ENCODE measurements at regions of chr11 and their contacts with region 1.

Region 1: GRCh38 chr11:10429526-10429925 is 25.5 kb upstream of the AMPD3 start:
- DNase-seq: no peak
- ATAC-seq: no peak
- H3K4me3 Mint-ChIP-seq: no peak overlapping the region
- H3K27ac Mint-ChIP-seq: no peak overlapping the region
- H3K4me1 Mint-ChIP-seq: no peaks in the 10 kb centered on the region
- H3K27me3 Mint-ChIP-seq: peaks cover 2% of the 10 kb centered on the region

Region 2: DNA sequence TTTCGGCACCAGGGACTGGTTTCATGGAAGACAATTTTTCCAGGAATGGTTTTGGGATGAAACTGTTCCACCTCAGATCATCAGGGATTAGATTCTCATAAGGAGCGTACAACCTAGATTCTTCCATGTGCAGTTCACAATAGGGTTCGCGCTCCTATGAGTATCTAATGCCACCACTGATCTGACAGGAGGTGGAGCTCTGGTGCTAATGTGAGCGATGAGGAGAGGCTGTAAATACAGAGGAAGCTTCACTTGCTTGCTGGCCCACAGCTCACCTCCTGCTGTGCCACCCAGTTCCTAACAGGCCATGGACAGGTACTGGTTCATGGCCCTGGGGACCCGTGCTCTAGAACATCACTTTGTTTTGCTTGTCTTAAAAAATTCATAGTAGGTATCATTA is 16.3 kb before region 1 on chr11:
- CTCF ChIA-PET with region 1: interaction called, 10 read pairs
- POLR2A ChIA-PET with region 1: no interaction called
- intact Hi-C with region 1: no loop called
- DNase-seq: peak; percentile 70
- ATAC-seq: peak; percentile 94
- H3K4me3 Mint-ChIP-seq: no peak overlapping the region
- H3K27ac Mint-ChIP-seq: no peak overlapping the region
- H3K4me1 Mint-ChIP-seq: peaks cover 32% of the 10 kb centered on the region
- H3K27me3 Mint-ChIP-seq: no peaks in the 10 kb centered on the region

Measured in activated CD4-positive, alpha-beta T cell treated with anti-CD3 and anti-CD28 coated beads for 36 hours (primary cell).